Activated CD4-positive, alpha-beta memory T cell treated with anti-CD3 and anti-CD28 coated beads, Interleukin-2, amount 10 ng/mL, durations not matched to agents 7 days and 5 days (primary cell): ENCODE measurements at regions of chr3 and their contacts with region 1.

Region 1: DNA sequence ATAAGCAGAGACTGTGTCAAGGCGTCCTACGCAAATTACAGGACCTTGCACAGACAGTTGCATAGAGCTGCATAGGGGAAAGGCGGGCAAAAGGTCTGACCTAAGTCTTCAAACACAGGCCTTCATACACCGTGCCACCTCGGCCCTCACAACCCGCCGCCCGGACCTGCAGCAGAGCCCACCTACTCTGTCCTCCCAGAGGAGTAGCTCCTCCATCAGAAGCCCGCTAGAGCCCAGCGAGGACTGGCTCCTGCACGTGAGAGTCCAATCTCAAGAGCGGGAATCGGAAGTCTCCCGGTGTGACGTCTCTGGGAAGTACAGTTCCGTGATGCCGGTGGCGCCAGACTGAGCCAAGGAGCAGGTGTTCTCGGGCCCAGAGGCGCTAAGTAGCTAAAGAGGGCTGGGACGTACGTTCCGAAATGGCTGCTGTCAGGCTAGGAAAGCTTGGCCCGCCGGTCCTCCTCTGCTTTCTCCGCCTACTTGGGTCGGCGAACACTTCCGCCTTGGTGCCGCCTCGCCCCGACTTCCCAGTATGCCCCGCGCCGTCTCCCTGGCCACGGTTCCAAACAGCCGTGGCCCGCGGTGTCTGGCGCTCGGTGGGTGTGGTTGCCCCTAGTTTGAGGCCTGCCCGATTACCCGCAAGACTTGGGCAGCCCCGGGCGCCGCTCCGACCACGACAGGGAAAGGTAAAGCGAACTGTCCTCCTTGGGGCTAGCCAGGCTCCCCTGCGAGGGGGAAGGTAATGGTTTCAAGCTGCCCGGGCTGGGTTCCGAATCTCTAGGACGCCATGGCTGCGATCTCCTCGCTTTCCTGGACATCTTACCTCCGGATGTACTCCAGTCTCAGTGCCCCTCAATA is at the starts of genes ASTE1 and NEK11:
- DNase-seq: peak; percentile 93
- H3K4me3 Mint-ChIP-seq: peak within 1 kb of the TSS; percentile 90
- H3K27ac Mint-ChIP-seq: peak within 1 kb of the TSS; percentile 87
- H3K4me1 Mint-ChIP-seq: peaks cover 36% of the 10 kb centered on the region
- H3K27me3 Mint-ChIP-seq: no peaks in the 10 kb centered on the region
- total RNA-seq, gene ASTE1: 12.8 TPM
- total RNA-seq, gene NEK11: 1.4 to 2.8 TPM

Region 2: GRCh38 chr3:130746246-130747039 is 280.1 kb before region 1 on chr3 and contains the start of gene PIK3R4:
- CTCF ChIA-PET with region 1: no interaction called
- POLR2A ChIA-PET with region 1: interaction called, 14 read pairs
- DNase-seq: peak; percentile 95
- H3K4me3 Mint-ChIP-seq: peak within 1 kb of the TSS; percentile 84
- H3K27ac Mint-ChIP-seq: peak within 1 kb of the TSS; percentile 92
- H3K4me1 Mint-ChIP-seq: peaks cover 52% of the 10 kb centered on the region
- H3K27me3 Mint-ChIP-seq: no peaks in the 10 kb centered on the region
- total RNA-seq, gene PIK3R4: 21.6 to 25.0 TPM

Region 3: DNA sequence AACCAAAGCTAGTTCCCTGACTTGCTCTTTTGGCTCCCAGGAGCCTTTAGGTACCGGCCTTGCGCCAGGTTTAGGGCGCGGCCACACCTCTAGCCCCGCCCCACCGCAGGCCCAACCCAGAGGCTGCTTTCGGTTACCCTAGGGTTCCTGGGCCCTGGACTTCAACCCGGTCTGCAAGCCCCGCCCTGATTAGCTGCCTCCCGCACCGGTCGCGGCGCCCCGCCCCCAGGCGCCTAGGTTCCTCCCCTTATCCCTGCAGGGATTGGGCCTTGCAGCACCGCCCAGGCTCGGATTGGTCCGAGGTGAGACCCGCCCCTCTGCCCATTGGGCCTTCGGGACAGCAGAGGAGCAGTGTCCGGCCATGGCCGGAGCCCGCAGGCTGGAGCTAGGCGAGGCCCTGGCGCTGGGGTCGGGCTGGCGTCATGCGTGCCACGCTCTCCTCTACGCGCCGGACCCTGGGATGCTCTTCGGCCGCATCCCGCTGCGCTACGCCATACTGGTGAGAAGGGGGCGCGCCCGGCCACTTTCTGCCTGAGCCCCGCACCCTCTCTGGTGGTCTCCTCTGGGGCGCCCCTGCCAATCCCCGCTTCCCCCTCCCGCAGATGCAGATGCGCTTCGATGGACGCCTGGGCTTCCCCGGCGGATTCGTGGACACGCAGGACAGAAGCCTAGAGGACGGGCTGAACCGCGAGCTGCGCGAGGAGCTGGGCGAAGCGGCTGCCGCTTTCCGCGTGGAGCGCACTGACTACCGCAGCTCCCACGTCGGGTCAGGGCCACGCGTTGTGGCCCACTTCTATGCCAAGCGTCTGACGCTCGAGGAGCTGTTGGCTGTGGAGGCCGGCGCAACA is 355.1 kb after region 1 on chr3 and contains the start of gene NUDT16:
- CTCF ChIA-PET with region 1: interaction called, 5 read pairs
- POLR2A ChIA-PET with region 1: interaction called, 12 read pairs
- DNase-seq: peak; percentile 99
- H3K4me3 Mint-ChIP-seq: peak within 1 kb of the TSS; percentile 96
- H3K27ac Mint-ChIP-seq: peak within 1 kb of the TSS; percentile 93
- H3K4me1 Mint-ChIP-seq: peaks cover 45% of the 10 kb centered on the region
- H3K27me3 Mint-ChIP-seq: no peaks in the 10 kb centered on the region
- total RNA-seq, gene NUDT16: 12.3 to 12.4 TPM